ENCODE measurements at regions of chr20 and their contacts with region 1.

Region 1: GRCh38 chr20:23245553-23246181 is 104.9 kb upstream of the NXT1 start:
- DNase-seq: peak; percentile 70 to 73
- ATAC-seq: peak; percentile 64 to 85 (median 79)
- H3K4me3 ChIP-seq: no peak overlapping the region
- H3K27ac ChIP-seq: peak overlapping the region in 7 of 10 donors; percentile 39 to 77 (median 70)
- H3K4me1 ChIP-seq: peaks cover 0 to 31% (median 22%) of the 10 kb centered on the region in 9 donors
- H3K27me3 ChIP-seq: peaks cover 0 to 13% (median 0%) of the 10 kb centered on the region in 7 donors
- CTCF ChIP-seq: peak; percentile 20 to 70 (median 63)

Region 2: DNA sequence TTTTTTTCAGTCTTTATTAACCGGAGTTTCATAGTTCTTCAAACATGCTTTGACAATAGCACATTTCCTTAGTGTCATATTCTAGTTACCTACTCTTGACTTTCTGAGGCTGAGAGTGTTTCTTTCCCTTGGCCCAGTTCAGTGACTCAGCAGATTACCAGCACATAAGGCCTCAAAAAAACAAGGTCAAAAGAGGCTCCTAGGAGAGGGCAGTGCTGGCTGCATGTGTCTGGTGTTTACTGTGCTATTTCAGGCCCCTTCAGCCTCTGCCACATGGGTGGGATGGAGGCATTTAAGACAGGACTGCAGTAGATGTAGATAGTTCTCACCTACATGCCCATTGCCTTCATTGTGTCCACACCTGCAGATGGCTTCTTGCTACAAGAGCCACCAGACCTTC is 408.8 kb before region 1 on chr20:
- intact Hi-C with region 1: loop called in 1 of 10 experiments (anchors 10 kb)
- DNase-seq: no peak
- ATAC-seq: peak in 1 of 8 donors; percentile 25
- H3K4me3 ChIP-seq: no peak overlapping the region
- H3K27ac ChIP-seq: no peak overlapping the region
- H3K4me1 ChIP-seq: no peaks in the 10 kb centered on the region
- H3K27me3 ChIP-seq: peaks cover 0 to 4% (median 0%) of the 10 kb centered on the region in 7 donors
- CTCF ChIP-seq: no peak

Region 3: DNA sequence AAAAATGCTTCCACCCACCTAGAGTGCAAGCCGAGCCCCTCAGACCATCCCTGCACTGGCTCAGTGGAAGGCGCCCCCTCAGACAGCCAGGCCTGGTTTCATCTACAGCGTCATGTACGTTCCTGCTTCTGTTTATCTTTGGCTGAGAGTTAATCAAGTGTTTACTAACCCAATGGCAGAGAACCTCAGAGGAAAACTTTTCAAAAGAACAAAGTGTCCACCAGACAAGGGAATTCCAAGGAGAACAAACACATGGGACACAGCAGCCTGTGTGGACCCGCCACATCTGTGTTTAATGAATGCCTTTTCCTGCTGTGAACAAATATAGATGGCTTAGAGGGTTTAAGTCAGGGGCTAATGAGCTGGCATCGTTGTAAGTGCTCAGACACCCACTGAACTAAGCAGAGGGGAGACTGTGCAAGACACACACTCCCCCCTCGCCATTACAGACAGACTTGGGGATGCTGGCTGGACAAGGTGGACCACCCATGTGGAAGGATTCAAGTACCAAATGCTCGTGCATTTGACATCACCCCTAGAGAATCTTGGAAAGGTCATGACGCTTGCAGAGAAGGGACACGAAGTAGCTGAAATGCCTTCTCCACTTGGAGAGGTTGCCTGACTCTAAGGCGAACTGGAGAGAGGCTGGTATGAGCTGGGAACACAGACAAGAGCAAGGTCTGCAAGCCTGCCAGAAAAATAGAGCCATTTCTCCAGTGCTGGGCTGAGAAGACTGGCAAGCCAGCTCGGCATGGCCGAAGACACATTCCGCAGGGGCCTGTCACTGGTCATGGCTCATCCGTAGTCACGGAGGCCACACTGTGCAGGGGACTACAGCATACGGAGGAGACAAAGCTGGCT is 51.4 kb after region 1 on chr20:
- intact Hi-C with region 1: loop called in 1 of 10 experiments (anchors 10 kb)
- DNase-seq: no peak
- ATAC-seq: peak in 1 of 8 donors; percentile 30
- H3K4me3 ChIP-seq: no peak overlapping the region
- H3K27ac ChIP-seq: no peak overlapping the region
- H3K4me1 ChIP-seq: peaks cover 0 to 19% (median 12%) of the 10 kb centered on the region in 9 donors
- H3K27me3 ChIP-seq: peaks cover 0 to 7% (median 0%) of the 10 kb centered on the region in 7 donors
- CTCF ChIP-seq: no peak

Region 4: GRCh38 chr20:23331450-23332350 is 86.0 kb after region 1 on chr20:
- intact Hi-C with region 1: loop called in 7 of 10 experiments (anchors 5 to 10 kb)
- DNase-seq: no peak
- ATAC-seq: peak in 1 of 8 donors; percentile 28
- H3K4me3 ChIP-seq: no peak overlapping the region
- H3K27ac ChIP-seq: peak overlapping the region in 1 of 10 donors; percentile 36
- H3K4me1 ChIP-seq: peaks cover 0 to 13% (median 7%) of the 10 kb centered on the region in 9 donors
- H3K27me3 ChIP-seq: no peaks in the 10 kb centered on the region
- CTCF ChIP-seq: no peak

Region 5: DNA sequence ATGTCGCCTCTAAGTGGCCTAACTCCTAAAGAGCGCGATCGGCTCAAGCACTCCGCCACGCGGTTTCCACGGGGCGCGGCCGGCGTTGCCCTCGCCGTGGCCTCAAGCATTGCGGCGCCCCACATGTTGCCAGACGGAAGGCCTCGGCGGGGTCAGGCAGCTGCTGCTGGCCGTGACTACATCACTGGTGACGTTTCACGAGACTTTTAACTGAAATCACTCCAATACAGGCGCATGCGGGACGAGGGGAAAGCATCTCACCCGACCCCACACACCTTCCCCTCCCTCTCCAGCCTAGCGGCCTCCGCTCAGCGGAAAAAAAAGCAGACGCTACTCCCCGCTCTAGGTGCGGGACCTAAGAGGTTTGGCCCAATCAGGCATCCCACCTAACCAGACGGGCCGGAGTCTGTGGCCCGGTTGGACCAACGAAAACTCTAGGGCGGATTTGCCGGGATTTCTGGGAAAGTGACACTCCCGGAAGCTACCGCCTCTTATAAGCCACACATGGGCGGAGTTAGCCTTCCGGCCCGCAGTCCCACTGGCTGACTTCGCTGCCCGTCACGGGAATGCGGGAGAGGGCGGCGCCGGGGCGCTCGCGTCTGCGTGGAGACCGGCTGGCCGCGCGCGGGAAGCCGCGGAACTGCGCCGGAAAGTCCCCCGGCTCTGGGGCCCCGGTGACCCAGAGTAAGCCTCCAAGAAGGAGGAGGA is 104.7 kb after region 1 on chr20 and contains the start of gene NXT1:
- intact Hi-C with region 1: loop called in 1 of 10 experiments (anchors 10 kb)
- DNase-seq: peak; percentile 97 to 98
- ATAC-seq: peak; percentile 93 to 97 (median 96)
- H3K4me3 ChIP-seq: peak within 1 kb of the TSS; percentile 78 to 97 (median 86)
- H3K27ac ChIP-seq: peak within 1 kb of the TSS; percentile 88 to 100 (median 98)
- H3K4me1 ChIP-seq: peaks cover 3 to 29% (median 24%) of the 10 kb centered on the region in 9 donors
- H3K27me3 ChIP-seq: no peaks in the 10 kb centered on the region
- CTCF ChIP-seq: no peak
- total RNA-seq, gene NXT1: 4.5 to 12.9 (median 6.5) TPM